ENCODE measurements at regions of chr1 and their contacts with region 1.

Region 1: DNA sequence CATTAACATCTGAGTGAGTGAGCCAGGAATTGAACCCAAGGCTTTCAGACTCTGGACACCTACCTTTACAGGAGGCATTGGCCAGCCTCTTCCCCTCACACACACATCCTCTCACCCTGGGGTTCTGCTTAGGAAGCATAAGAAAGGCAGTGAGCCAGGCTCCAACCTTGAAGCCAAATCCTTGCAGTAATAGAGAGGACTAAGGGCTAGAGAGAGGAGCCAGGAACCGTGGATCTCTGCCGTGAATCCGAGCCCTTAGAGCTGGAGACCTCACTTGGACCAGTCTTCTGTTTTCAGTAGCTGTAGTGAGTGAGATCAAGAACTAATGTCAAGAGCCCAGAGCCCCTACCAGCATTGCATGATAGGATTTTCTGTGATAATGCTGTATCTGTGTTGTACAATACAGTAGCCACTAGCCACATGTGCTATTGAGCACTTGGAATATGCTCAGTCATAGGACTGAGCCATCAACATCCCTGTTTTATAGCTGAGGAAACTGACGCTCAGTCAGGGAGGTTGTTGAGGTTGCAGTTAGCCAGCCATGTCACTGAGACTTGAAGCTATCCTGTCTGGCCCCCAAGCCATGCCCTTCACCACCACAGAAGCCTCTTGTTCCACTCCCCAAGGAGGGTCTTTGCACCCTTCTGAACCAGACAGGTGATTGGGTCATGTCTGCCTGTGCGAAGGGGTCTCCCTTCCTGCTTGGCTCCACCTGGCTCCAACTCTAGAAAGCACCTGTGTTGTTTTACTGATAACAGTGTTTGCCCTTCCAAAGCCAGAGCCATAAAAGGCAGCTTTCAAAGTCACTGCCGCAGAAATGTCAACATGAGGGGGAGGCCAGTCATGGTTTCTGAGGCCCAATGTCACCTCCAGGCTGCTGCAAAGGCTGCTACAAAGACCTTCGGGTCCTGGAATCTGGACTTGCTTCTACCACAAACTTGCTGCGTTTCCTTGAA is 101.1 kb upstream of the JUN start:
- DNase-seq: peak; percentile 87 to 93
- H3K4me3 ChIP-seq: no peak overlapping the region
- H3K4me3 Mint-ChIP-seq: peak overlapping the region; percentile 42
- H3K27ac Mint-ChIP-seq: peak overlapping the region; percentile 78
- H3K4me1 ChIP-seq: peaks cover 49% of the 10 kb centered on the region
- H3K4me1 Mint-ChIP-seq: peaks cover 42% of the 10 kb centered on the region
- H3K27me3 ChIP-seq: no peaks in the 10 kb centered on the region
- H3K27me3 Mint-ChIP-seq: no peaks in the 10 kb centered on the region
- CTCF ChIP-seq: no peak

Region 2: DNA sequence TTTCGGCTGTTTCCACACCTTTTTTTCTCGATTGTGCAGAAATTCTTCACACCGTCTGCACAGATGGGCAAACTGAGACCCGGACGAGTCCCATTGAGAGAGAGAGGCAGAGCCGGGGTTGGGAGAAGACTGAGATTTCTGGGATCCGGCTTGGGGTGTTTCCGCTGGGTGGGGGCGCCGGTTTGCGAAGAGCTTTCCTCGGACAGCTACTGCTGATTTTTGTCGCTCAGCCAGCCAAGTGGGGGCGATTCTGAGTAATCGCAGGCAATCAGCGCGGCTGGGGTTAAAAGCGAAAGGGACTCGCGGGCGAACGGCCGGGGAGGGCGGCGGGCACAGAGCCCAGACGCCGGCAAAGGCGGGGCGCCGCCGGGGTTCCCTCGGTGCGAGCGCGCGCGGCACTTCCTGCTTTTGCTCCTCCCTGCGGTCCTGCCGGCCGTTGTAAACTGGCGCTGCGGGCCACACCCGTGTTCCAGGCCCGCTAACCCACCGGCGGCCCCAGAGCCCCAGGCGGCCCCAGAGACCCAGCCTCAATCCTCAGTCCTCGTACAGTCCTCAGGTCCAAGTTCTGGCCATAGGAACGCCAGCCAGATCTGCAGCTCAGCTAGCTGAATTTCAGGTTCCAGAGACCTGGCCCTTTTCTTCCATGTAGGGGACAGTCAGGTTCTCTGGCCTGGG is 68.8 kb before region 1 on chr1:
- CTCF ChIA-PET with region 1: no interaction called
- POLR2A ChIA-PET with region 1: no interaction called
- intact Hi-C with region 1: loop called (anchors 1 kb)
- DNase-seq: peak; percentile 74 to 80
- H3K4me3 ChIP-seq: peak overlapping the region; percentile 55
- H3K4me3 Mint-ChIP-seq: peak overlapping the region; percentile 77
- H3K27ac Mint-ChIP-seq: peak overlapping the region; percentile 73
- H3K4me1 ChIP-seq: peaks cover 22% of the 10 kb centered on the region
- H3K4me1 Mint-ChIP-seq: peaks cover 7% of the 10 kb centered on the region
- H3K27me3 ChIP-seq: no peaks in the 10 kb centered on the region
- H3K27me3 Mint-ChIP-seq: no peaks in the 10 kb centered on the region
- CTCF ChIP-seq: no peak

Region 3: GRCh38 chr1:58870296-58870676 is 14.7 kb before region 1 on chr1:
- CTCF ChIA-PET with region 1: no interaction called
- POLR2A ChIA-PET with region 1: no interaction called
- intact Hi-C with region 1: loop called (anchors 1 kb)
- DNase-seq: peak; percentile 59 to 65
- H3K4me3 ChIP-seq: no peak overlapping the region
- H3K4me3 Mint-ChIP-seq: no peak overlapping the region
- H3K27ac Mint-ChIP-seq: no peak overlapping the region
- H3K4me1 ChIP-seq: peaks cover 5% of the 10 kb centered on the region; the same call in 1 of the 2 replicates
- H3K4me1 Mint-ChIP-seq: no peaks in the 10 kb centered on the region
- H3K27me3 ChIP-seq: no peaks in the 10 kb centered on the region
- H3K27me3 Mint-ChIP-seq: no peaks in the 10 kb centered on the region
- CTCF ChIP-seq: no peak

Region 4: GRCh38 chr1:58903514-58904298 is 18.7 kb after region 1 on chr1:
- CTCF ChIA-PET with region 1: no interaction called
- POLR2A ChIA-PET with region 1: interaction called, 3 read pairs
- intact Hi-C with region 1: loop called (anchors 1 kb)
- DNase-seq: peak; percentile 82 to 86
- H3K4me3 ChIP-seq: peak overlapping the region; percentile 48
- H3K4me3 Mint-ChIP-seq: peak overlapping the region; percentile 49
- H3K27ac Mint-ChIP-seq: peak overlapping the region; percentile 77
- H3K4me1 ChIP-seq: peaks cover 31% of the 10 kb centered on the region
- H3K4me1 Mint-ChIP-seq: peaks cover 22% of the 10 kb centered on the region
- H3K27me3 ChIP-seq: no peaks in the 10 kb centered on the region
- H3K27me3 Mint-ChIP-seq: no peaks in the 10 kb centered on the region
- CTCF ChIP-seq: no peak

Region 5: DNA sequence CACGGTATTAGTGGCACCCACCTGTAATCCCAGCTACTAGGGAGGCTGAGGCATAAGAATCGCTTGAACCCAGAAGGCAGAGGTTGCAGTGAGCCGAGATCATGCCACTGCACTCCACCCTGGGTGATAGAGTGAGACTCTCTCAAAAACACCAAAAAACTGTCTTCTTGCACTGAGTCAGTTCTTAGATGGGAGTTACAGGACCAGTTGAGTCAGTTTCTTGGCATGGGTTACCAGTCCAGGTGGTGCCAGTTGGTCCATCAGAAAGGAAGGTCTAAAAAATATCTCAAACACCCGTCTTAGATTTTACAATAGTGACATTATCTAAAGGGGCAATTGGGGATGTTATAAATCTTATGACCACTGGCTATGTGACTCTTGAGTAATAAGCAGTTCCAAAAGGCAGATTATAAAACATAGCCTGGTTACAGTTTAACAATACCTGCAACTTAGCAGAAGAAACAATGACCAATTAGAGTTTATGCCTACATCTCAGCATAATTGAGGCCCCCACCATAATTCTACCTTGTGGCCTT is 205.0 kb after region 1 on chr1:
- CTCF ChIA-PET with region 1: no interaction called
- POLR2A ChIA-PET with region 1: no interaction called
- intact Hi-C with region 1: loop called (anchors 1 kb)
- DNase-seq: no peak
- H3K4me3 ChIP-seq: no peak overlapping the region
- H3K4me3 Mint-ChIP-seq: no peak overlapping the region
- H3K27ac Mint-ChIP-seq: no peak overlapping the region
- H3K4me1 ChIP-seq: no peaks in the 10 kb centered on the region
- H3K4me1 Mint-ChIP-seq: peaks cover 9% of the 10 kb centered on the region
- H3K27me3 ChIP-seq: no peaks in the 10 kb centered on the region
- H3K27me3 Mint-ChIP-seq: no peaks in the 10 kb centered on the region
- CTCF ChIP-seq: no peak

Measured in Caco-2 (cell line).